GM12878 (cell line): ENCODE measurements at regions of chr12 and their contacts with region 1.

Region 1: GRCh38 chr12:92505254-92506231 is 197.2 kb upstream of the PLEKHG7 start:
- DNase-seq: peak; percentile 86
- ATAC-seq: peak; percentile 41
- H3K4me3 ChIP-seq: peak overlapping the region; percentile 46
- H3K27ac ChIP-seq: peak overlapping the region; percentile 100
- H3K4me1 ChIP-seq: peaks cover 53% of the 10 kb centered on the region
- H3K27me3 ChIP-seq: no peaks in the 10 kb centered on the region
- CTCF ChIP-seq: no peak
- EP300 ChIP-seq: peak; percentile 15 to 44; a peak in 2 of 4 replicates
- POLR2A ChIP-seq: peak; percentile 56; the same call in 1 of the 2 replicates
- RAD21 ChIP-seq: no peak

Region 2: DNA sequence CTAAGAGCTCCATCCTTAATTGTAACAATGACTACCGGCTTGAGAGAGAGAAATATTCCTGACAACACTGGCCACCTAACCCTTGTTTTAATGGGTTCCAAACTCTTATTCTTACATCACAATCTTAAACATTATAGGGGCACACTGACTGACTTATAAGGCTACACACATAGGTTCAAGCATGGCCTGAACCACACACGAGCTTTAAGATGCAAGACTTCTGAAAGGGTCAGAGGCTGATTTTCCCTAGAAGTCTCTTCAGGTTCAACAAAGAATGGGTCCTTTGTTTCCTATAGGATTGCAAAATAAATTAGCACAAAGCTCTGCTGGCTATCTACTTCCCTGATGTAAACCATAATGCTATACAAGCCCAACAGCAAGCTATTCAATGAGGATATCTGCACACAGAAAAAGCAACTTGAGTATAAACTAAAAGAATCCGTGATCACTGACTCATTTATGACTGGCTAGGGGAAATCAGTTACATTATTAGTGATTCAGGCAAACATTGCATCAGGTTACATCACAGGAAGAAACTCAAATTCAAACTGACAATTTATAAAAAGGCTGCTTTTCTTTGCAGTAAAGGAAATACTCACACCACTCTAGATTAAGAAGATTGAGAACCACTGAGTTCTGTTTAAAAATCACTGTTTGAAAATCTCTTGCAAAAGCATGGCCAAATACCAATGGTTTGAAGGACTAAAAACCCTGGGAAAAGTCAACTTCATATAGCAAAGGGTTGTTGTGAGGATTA is 368.4 kb before region 1 on chr12:
- CTCF ChIA-PET with region 1: interaction called, 9 read pairs
- POLR2A ChIA-PET with region 1: interaction called, 4 read pairs
- RAD21 ChIA-PET with region 1: interaction called, 69 read pairs
- SMC1A ChIA-PET with region 1: interaction called, 58 read pairs
- in situ Hi-C with region 1: no loop called
- intact Hi-C with region 1: no loop called
- DNase-seq: no peak
- ATAC-seq: peak; percentile 7
- H3K4me3 ChIP-seq: peak overlapping the region; percentile 89
- H3K27ac ChIP-seq: peak overlapping the region; percentile 85
- H3K4me1 ChIP-seq: peaks cover 13% of the 10 kb centered on the region; the same call in 1 of the 2 replicates
- H3K27me3 ChIP-seq: no peaks in the 10 kb centered on the region
- CTCF ChIP-seq: no peak
- EP300 ChIP-seq: no peak
- POLR2A ChIP-seq: no peak
- RAD21 ChIP-seq: no peak

Region 3: GRCh38 chr12:92424338-92424737 is 81.2 kb before region 1 on chr12:
- CTCF ChIA-PET with region 1: no interaction called
- POLR2A ChIA-PET with region 1: interaction called, 10 read pairs
- RAD21 ChIA-PET with region 1: no interaction called
- SMC1A ChIA-PET with region 1: interaction called, 79 read pairs
- in situ Hi-C with region 1: no loop called
- intact Hi-C with region 1: no loop called
- DNase-seq: no peak
- ATAC-seq: no peak
- H3K4me3 ChIP-seq: no peak overlapping the region
- H3K27ac ChIP-seq: no peak overlapping the region
- H3K4me1 ChIP-seq: peaks cover 17% of the 10 kb centered on the region; the same call in 1 of the 2 replicates
- H3K27me3 ChIP-seq: no peaks in the 10 kb centered on the region
- CTCF ChIP-seq: no peak
- EP300 ChIP-seq: no peak
- POLR2A ChIP-seq: no peak
- RAD21 ChIP-seq: no peak

Region 4: GRCh38 chr12:92472201-92472600 is 33.3 kb before region 1 on chr12:
- CTCF ChIA-PET with region 1: interaction called, 13 read pairs
- POLR2A ChIA-PET with region 1: interaction called, 32 read pairs
- RAD21 ChIA-PET with region 1: interaction called, 97 read pairs
- SMC1A ChIA-PET with region 1: interaction called, 64 read pairs
- in situ Hi-C with region 1: no loop called
- intact Hi-C with region 1: loop called (anchors 1 kb)
- DNase-seq: no peak
- ATAC-seq: no peak
- H3K4me3 ChIP-seq: no peak overlapping the region
- H3K27ac ChIP-seq: peak overlapping the region; percentile 81
- H3K4me1 ChIP-seq: peaks cover 40% of the 10 kb centered on the region
- H3K27me3 ChIP-seq: no peaks in the 10 kb centered on the region
- CTCF ChIP-seq: no peak
- EP300 ChIP-seq: no peak
- POLR2A ChIP-seq: no peak
- RAD21 ChIP-seq: no peak

Region 5: DNA sequence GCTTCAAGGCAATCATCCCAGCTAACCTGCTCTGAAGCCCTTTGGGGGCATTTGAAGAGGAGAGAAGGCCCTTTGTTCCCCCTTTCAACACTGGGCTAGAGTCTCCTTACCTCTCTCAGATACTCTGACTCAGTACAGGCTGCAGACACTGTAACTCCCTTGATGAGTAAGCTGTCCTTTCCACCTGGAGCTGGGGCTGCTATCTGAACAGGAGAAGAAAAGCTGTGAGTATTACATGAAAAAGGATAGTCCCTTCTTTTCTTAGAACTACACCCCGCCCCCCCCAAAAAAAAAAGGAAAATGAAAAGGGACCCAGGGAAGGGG is 10.7 kb after region 1 on chr12:
- CTCF ChIA-PET with region 1: interaction called, 11 read pairs
- POLR2A ChIA-PET with region 1: interaction called, 11 read pairs
- RAD21 ChIA-PET with region 1: interaction called, 41 read pairs
- SMC1A ChIA-PET with region 1: interaction called, 62 read pairs
- in situ Hi-C with region 1: no loop called
- intact Hi-C with region 1: no loop called
- DNase-seq: no peak
- ATAC-seq: peak; percentile 85
- H3K4me3 ChIP-seq: no peak overlapping the region
- H3K27ac ChIP-seq: no peak overlapping the region
- H3K4me1 ChIP-seq: no peaks in the 10 kb centered on the region
- H3K27me3 ChIP-seq: no peaks in the 10 kb centered on the region
- CTCF ChIP-seq: no peak
- EP300 ChIP-seq: no peak
- POLR2A ChIP-seq: no peak
- RAD21 ChIP-seq: no peak

Region 6: GRCh38 chr12:92546635-92547348 is 41.2 kb after region 1 on chr12:
- CTCF ChIA-PET with region 1: interaction called, 59 read pairs
- POLR2A ChIA-PET with region 1: interaction called, 168 read pairs
- RAD21 ChIA-PET with region 1: interaction called, 346 read pairs
- SMC1A ChIA-PET with region 1: interaction called, 228 read pairs
- in situ Hi-C with region 1: no loop called
- intact Hi-C with region 1: no loop called
- DNase-seq: no peak
- ATAC-seq: peak; percentile 60
- H3K4me3 ChIP-seq: no peak overlapping the region
- H3K27ac ChIP-seq: no peak overlapping the region
- H3K4me1 ChIP-seq: peaks cover 43% of the 10 kb centered on the region
- H3K27me3 ChIP-seq: no peaks in the 10 kb centered on the region
- CTCF ChIP-seq: no peak
- EP300 ChIP-seq: peak in 1 of 2 experiments; percentile 52; a peak in 2 of 4 replicates
- POLR2A ChIP-seq: no peak
- RAD21 ChIP-seq: no peak

Region 7: DNA sequence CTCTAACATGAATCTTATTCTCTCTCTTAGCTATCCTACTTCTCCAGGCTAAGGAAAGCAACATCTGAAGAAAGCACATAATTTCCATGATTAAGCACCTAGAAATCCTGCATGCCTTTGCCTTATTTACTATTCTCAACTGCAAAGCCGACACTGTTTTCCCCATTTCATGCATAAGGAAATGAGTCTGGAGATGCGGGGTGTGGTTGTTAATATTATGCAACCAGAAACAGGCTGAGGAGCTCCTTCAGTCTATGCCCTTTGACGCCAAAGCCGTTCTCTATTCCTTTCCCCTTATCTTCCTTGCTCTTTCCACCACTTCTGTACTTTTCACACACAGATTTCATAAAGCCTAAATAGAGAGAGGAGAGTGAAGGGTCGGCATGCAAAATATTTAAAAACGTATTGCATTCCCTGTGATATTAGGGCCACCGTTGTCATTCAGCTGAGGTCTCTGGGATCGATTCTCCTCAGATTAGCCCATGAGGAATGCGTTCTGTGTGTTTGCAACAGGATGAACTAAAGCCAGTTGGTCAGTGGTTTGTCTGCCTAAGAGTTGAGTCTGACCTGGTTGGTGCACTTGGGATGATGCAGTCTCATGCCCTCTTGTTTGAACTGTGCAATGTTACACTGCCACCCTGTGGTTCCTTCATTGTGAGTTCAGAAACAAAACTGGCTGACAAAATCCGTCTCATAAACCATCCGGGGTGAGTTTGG is 144.1 kb after region 1 on chr12:
- CTCF ChIA-PET with region 1: interaction called, 3 read pairs
- POLR2A ChIA-PET with region 1: no interaction called
- RAD21 ChIA-PET with region 1: interaction called, 3 read pairs
- SMC1A ChIA-PET with region 1: interaction called, 3 read pairs
- in situ Hi-C with region 1: no loop called
- intact Hi-C with region 1: loop called (anchors 5 kb)
- DNase-seq: peak; percentile 67
- ATAC-seq: peak; percentile 98
- H3K4me3 ChIP-seq: no peak overlapping the region
- H3K27ac ChIP-seq: no peak overlapping the region
- H3K4me1 ChIP-seq: no peaks in the 10 kb centered on the region
- H3K27me3 ChIP-seq: no peaks in the 10 kb centered on the region
- CTCF ChIP-seq: peak; percentile 72 to 85 (median 76); a peak in 5 of 6 replicates
- EP300 ChIP-seq: no peak
- POLR2A ChIP-seq: no peak
- RAD21 ChIP-seq: peak; percentile 96